Caco-2 (cell line): ENCODE measurements at regions of chr5 and their contacts with region 1.

Region 1: DNA sequence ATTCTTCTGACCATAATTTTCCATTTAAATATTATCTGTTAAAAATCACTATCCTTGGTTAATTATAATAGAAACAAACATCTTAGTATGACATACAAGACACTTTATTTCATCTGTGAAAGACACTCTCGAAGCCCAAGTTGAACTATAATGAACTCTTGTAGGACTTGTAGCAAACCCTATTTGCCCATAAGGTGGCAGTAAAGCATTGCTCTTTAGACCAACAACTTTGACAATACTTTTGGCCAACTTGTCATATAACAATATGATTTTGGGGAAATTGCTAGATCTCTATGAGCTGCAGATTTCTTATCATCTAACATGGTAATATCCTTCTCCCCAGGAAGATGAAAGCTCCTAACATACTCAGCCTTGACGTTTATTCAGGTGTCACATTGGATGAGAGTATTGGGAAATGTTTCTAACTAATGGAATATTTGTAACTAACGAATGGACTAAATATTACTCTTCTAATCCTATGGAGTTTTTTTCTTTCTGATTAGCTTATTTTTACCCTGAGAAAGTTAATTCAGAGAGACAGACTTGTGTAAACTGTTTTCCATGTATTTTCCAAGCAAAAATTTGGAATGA is 11.0 kb downstream of the SPINK14 start:
- DNase-seq: peak in 1 of 2 experiments; percentile 44
- H3K4me3 ChIP-seq: no peak overlapping the region
- H3K4me3 Mint-ChIP-seq: no peak overlapping the region
- H3K27ac Mint-ChIP-seq: no peak overlapping the region
- H3K4me1 ChIP-seq: no peaks in the 10 kb centered on the region
- H3K4me1 Mint-ChIP-seq: peaks cover 9% of the 10 kb centered on the region
- H3K27me3 ChIP-seq: no peaks in the 10 kb centered on the region
- H3K27me3 Mint-ChIP-seq: no peaks in the 10 kb centered on the region
- CTCF ChIP-seq: peak; percentile 64 to 69

Region 2: GRCh38 chr5:147245381-147246165 is 933.8 kb before region 1 on chr5:
- CTCF ChIA-PET with region 1: no interaction called
- POLR2A ChIA-PET with region 1: no interaction called
- intact Hi-C with region 1: no loop called
- DNase-seq: no peak
- H3K4me3 ChIP-seq: no peak overlapping the region
- H3K4me3 Mint-ChIP-seq: no peak overlapping the region
- H3K27ac Mint-ChIP-seq: no peak overlapping the region
- H3K4me1 ChIP-seq: no peaks in the 10 kb centered on the region
- H3K4me1 Mint-ChIP-seq: no peaks in the 10 kb centered on the region
- H3K27me3 ChIP-seq: no peaks in the 10 kb centered on the region
- H3K27me3 Mint-ChIP-seq: peaks cover 7% of the 10 kb centered on the region
- CTCF ChIP-seq: no peak

Region 3: GRCh38 chr5:147685993-147686392 is 493.3 kb before region 1 on chr5:
- CTCF ChIA-PET with region 1: no interaction called
- POLR2A ChIA-PET with region 1: no interaction called
- intact Hi-C with region 1: no loop called
- DNase-seq: no peak
- H3K4me3 ChIP-seq: no peak overlapping the region
- H3K4me3 Mint-ChIP-seq: no peak overlapping the region
- H3K27ac Mint-ChIP-seq: no peak overlapping the region
- H3K4me1 ChIP-seq: no peaks in the 10 kb centered on the region
- H3K4me1 Mint-ChIP-seq: no peaks in the 10 kb centered on the region
- H3K27me3 ChIP-seq: no peaks in the 10 kb centered on the region
- H3K27me3 Mint-ChIP-seq: peaks cover 4% of the 10 kb centered on the region
- CTCF ChIP-seq: no peak

Region 4: GRCh38 chr5:148135091-148136048 is 44.0 kb before region 1 on chr5:
- CTCF ChIA-PET with region 1: no interaction called
- POLR2A ChIA-PET with region 1: no interaction called
- intact Hi-C with region 1: loop called (anchors 5 kb)
- DNase-seq: no peak
- H3K4me3 ChIP-seq: no peak overlapping the region
- H3K4me3 Mint-ChIP-seq: no peak overlapping the region
- H3K27ac Mint-ChIP-seq: peak overlapping the region; percentile 64
- H3K4me1 ChIP-seq: peaks cover 34% of the 10 kb centered on the region
- H3K4me1 Mint-ChIP-seq: peaks cover 9% of the 10 kb centered on the region
- H3K27me3 ChIP-seq: no peaks in the 10 kb centered on the region
- H3K27me3 Mint-ChIP-seq: no peaks in the 10 kb centered on the region
- CTCF ChIP-seq: no peak

Region 5: GRCh38 chr5:148290271-148291195 is 111.2 kb after region 1 on chr5:
- CTCF ChIA-PET with region 1: no interaction called
- POLR2A ChIA-PET with region 1: no interaction called
- intact Hi-C with region 1: loop called (anchors 5 kb)
- DNase-seq: peak in 1 of 2 experiments; percentile 19
- H3K4me3 ChIP-seq: no peak overlapping the region
- H3K4me3 Mint-ChIP-seq: no peak overlapping the region
- H3K27ac Mint-ChIP-seq: no peak overlapping the region
- H3K4me1 ChIP-seq: no peaks in the 10 kb centered on the region
- H3K4me1 Mint-ChIP-seq: no peaks in the 10 kb centered on the region
- H3K27me3 ChIP-seq: no peaks in the 10 kb centered on the region
- H3K27me3 Mint-ChIP-seq: peaks cover 8% of the 10 kb centered on the region
- CTCF ChIP-seq: peak; percentile 52 to 54

Region 6: GRCh38 chr5:148374692-148375360 is 195.5 kb after region 1 on chr5:
- CTCF ChIA-PET with region 1: no interaction called
- POLR2A ChIA-PET with region 1: no interaction called
- intact Hi-C with region 1: loop called (anchors 1 kb)
- DNase-seq: peak; percentile 75 to 77
- H3K4me3 ChIP-seq: no peak overlapping the region
- H3K4me3 Mint-ChIP-seq: no peak overlapping the region
- H3K27ac Mint-ChIP-seq: no peak overlapping the region
- H3K4me1 ChIP-seq: no peaks in the 10 kb centered on the region
- H3K4me1 Mint-ChIP-seq: peaks cover 10% of the 10 kb centered on the region
- H3K27me3 ChIP-seq: no peaks in the 10 kb centered on the region
- H3K27me3 Mint-ChIP-seq: no peaks in the 10 kb centered on the region
- CTCF ChIP-seq: peak; percentile 83 to 93